ENCODE measurements at regions of chr17 and their contacts with region 1.

Region 1: GRCh38 chr17:43576563-43577229 is 30.6 kb upstream of the ETV4 start:
- DNase-seq: peak; percentile 62 to 79 (median 68)
- ATAC-seq: peak; percentile 75 to 85 (median 79)
- H3K4me3 ChIP-seq: no peak overlapping the region
- H3K27ac ChIP-seq: peak overlapping the region in 2 of 12 donors; percentile 70 to 75
- H3K4me1 ChIP-seq: peaks cover 0 to 52% (median 37%) of the 10 kb centered on the region in 12 donors
- H3K27me3 ChIP-seq: no peaks in the 10 kb centered on the region
- CTCF ChIP-seq: peak; percentile 88 to 99 (median 92)
- POLR2A ChIP-seq: no peak

Region 2: DNA sequence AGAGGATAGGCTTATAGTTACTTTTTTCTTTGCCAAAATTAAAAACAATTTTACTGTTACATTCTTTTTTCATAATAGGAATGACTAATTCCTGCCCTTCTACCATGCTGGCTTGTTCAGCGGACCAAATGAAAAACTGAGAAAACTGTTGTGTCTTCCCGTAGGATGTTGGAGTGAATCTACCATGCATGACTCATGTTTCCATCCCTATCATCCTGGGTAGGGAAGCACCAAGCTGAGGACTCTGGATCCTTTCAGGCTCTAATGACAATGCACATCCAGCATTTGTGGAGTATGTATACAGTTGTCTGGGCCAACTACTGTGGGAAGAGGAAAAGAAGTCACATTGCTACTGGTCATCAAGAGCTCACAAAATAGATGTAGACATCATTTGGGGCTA is 134.0 kb before region 1 on chr17:
- intact Hi-C with region 1: no loop called
- DNase-seq: no peak
- ATAC-seq: peak in 2 of 4 donors; percentile 49 to 69
- H3K4me3 ChIP-seq: no peak overlapping the region
- H3K27ac ChIP-seq: no peak overlapping the region
- H3K4me1 ChIP-seq: no peaks in the 10 kb centered on the region
- H3K27me3 ChIP-seq: no peaks in the 10 kb centered on the region
- CTCF ChIP-seq: no peak
- POLR2A ChIP-seq: no peak

Region 3: DNA sequence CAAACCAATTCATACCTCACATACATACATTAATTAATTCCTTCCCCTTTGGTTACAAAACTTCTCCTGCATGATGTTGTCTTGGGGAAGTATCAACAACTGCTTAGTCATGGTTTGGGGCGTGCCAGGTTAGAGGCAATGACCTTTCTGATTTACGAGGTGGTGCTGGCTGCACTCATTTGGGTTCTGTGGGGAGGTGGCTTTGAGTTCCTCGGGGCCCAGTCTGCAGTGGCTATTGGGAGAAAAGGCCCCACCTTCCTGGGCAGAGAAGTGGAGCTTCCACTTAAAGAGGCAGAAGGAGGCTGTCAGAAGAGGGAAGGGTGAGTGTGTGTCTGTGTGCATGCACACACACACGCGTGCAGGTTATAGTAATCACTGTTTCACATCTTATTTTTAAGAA is 20.4 kb before region 1 on chr17:
- intact Hi-C with region 1: no loop called
- DNase-seq: no peak
- ATAC-seq: peak in 2 of 4 donors; percentile 49 to 81
- H3K4me3 ChIP-seq: no peak overlapping the region
- H3K27ac ChIP-seq: no peak overlapping the region
- H3K4me1 ChIP-seq: peaks cover 0 to 20% (median 2%) of the 10 kb centered on the region in 12 donors
- H3K27me3 ChIP-seq: peaks cover 0 to 6% (median 0%) of the 10 kb centered on the region in 9 donors
- CTCF ChIP-seq: no peak
- POLR2A ChIP-seq: no peak

Region 4: DNA sequence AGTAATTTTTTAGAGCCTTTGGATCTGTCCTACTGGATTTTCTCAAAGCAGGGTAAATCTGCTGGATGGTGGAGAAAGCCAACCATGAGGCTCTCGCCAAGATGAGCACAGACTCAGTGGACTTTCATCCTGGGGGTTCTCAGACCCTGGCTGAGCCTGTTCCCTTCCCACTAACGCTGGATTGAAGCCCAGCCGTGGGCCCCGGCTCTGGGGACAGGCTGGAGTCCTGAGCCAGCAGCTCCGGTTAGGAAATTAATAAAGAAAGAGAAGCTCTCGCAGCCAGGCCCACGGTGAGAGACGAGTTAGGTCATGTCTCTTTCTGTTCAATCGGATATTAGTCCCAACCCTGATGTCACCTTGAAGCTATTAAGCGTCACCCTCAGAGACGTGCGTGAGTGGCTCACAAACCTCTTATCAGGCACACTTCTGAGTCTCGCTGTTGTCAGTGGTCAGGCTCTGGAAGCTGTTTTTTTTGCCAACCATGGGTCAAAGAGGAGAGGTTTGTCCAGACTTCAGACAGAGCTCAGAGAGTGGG is 58.0 kb after region 1 on chr17:
- intact Hi-C with region 1: loop called in 1 of 10 experiments (anchors 5 kb)
- DNase-seq: peak; percentile 58 to 83 (median 75)
- ATAC-seq: peak; percentile 43 to 86 (median 80)
- H3K4me3 ChIP-seq: no peak overlapping the region
- H3K27ac ChIP-seq: peak overlapping the region; percentile 11 to 80 (median 52)
- H3K4me1 ChIP-seq: peaks cover 0 to 21% (median 11%) of the 10 kb centered on the region in 12 donors
- H3K27me3 ChIP-seq: no peaks in the 10 kb centered on the region
- CTCF ChIP-seq: no peak
- POLR2A ChIP-seq: no peak

Region 5: GRCh38 chr17:43645765-43646481 is 69.2 kb after region 1 on chr17:
- intact Hi-C with region 1: loop called in 1 of 10 experiments (anchors 2 kb)
- DNase-seq: peak; percentile 87 to 91 (median 89)
- ATAC-seq: peak; percentile 35 to 88 (median 80)
- H3K4me3 ChIP-seq: peak overlapping the region in 11 of 12 donors; percentile 19 to 60 (median 52)
- H3K27ac ChIP-seq: peak overlapping the region; percentile 81 to 97 (median 90)
- H3K4me1 ChIP-seq: peaks cover 0 to 69% (median 49%) of the 10 kb centered on the region in 12 donors
- H3K27me3 ChIP-seq: peaks cover 0 to 10% (median 0%) of the 10 kb centered on the region in 9 donors
- CTCF ChIP-seq: peak in 4 of 12 donors; percentile 21 to 45 (median 36)
- POLR2A ChIP-seq: peak in 1 of 2 donors; percentile 51

Region 6: GRCh38 chr17:43661699-43662412 is 85.2 kb after region 1 on chr17 and contains the start of gene MEOX1:
- intact Hi-C with region 1: loop called in 1 of 10 experiments (anchors 2 kb)
- DNase-seq: peak; percentile 51 to 65 (median 65)
- ATAC-seq: peak; percentile 26 to 78 (median 53)
- H3K4me3 ChIP-seq: peak within 1 kb of the TSS; percentile 21 to 71 (median 54)
- H3K27ac ChIP-seq: peak within 1 kb of the TSS; percentile 49 to 94 (median 82)
- H3K4me1 ChIP-seq: peaks cover 0 to 75% (median 35%) of the 10 kb centered on the region in 12 donors
- H3K27me3 ChIP-seq: no peaks in the 10 kb centered on the region
- CTCF ChIP-seq: no peak
- POLR2A ChIP-seq: peak in 1 of 2 donors; percentile 71
- total RNA-seq, gene MEOX1: 9.7 to 24.0 (median 16.1) TPM

Region 7: DNA sequence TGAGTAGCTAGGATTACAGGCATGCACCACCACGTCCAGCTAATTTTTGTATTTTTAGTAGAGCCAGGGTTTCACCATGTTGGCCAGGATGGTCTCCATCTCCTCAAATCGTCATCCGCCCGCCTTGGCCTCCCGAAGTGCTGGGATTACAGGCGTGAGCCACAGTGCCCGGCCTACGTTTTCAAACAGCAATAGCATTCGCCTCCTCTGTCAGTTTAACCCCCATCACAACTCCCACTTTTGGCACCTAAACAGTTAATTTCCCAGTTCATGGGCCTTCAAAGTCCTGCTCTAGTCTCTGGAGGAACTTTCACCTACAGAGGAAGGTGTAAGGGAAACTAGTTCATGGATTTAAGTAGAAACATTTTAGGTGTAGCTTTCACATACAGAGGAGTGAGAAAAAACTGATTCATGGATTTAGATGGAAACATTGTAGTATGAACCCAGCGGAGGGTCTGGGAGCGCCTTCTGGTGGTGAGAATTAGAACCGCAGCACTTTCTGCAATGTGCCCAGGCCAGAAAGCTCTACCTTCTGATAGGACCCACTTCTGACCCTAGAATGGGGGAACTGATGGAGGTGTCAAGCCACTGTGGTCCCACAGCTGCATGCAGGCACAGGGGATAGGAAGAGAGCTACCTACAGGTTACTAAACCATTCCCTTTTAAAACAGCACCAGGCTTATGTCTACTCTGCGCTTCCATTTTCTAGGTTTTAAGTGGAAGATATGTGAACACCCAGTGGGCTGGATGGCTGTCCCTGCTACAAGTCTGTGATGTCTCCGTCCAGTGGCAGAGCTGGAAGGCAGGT is 97.0 kb after region 1 on chr17:
- intact Hi-C with region 1: loop called in 9 of 10 experiments (anchors 1 kb)
- DNase-seq: peak; percentile 60 to 78 (median 72)
- ATAC-seq: peak in 3 of 4 donors; percentile 61 to 72 (median 67)
- H3K4me3 ChIP-seq: no peak overlapping the region
- H3K27ac ChIP-seq: no peak overlapping the region
- H3K4me1 ChIP-seq: peaks cover 0 to 35% (median 12%) of the 10 kb centered on the region in 12 donors
- H3K27me3 ChIP-seq: no peaks in the 10 kb centered on the region
- CTCF ChIP-seq: peak; percentile 87 to 99 (median 96)
- POLR2A ChIP-seq: no peak

Region 8: GRCh38 chr17:43740541-43740940 is 163.8 kb after region 1 on chr17:
- intact Hi-C with region 1: loop called in 1 of 10 experiments (anchors 10 kb)
- DNase-seq: no peak
- ATAC-seq: no peak
- H3K4me3 ChIP-seq: no peak overlapping the region
- H3K27ac ChIP-seq: no peak overlapping the region
- H3K4me1 ChIP-seq: peaks cover 0 to 5% (median 0%) of the 10 kb centered on the region in 12 donors
- H3K27me3 ChIP-seq: no peaks in the 10 kb centered on the region
- CTCF ChIP-seq: no peak
- POLR2A ChIP-seq: no peak

Region 9: GRCh38 chr17:43760254-43760852 is 183.7 kb after region 1 on chr17:
- intact Hi-C with region 1: loop called in 9 of 10 experiments (anchors 5 to 10 kb)
- DNase-seq: peak; percentile 91 to 95 (median 92)
- ATAC-seq: peak; percentile 67 to 92 (median 84)
- H3K4me3 ChIP-seq: no peak overlapping the region
- H3K27ac ChIP-seq: no peak overlapping the region
- H3K4me1 ChIP-seq: peaks cover 0 to 22% (median 4%) of the 10 kb centered on the region in 12 donors
- H3K27me3 ChIP-seq: peaks cover 0 to 31% (median 10%) of the 10 kb centered on the region in 9 donors
- CTCF ChIP-seq: peak; percentile 94 to 100 (median 99)
- POLR2A ChIP-seq: no peak